Sigmoid colon (tissue), 7 donors: ENCODE measurements at regions of chr20 and their contacts with region 1.

Region 1: GRCh38 chr20:8131598-8132483 is at the start of gene PLCB1:
- DNase-seq: peak; percentile 96
- H3K4me3 ChIP-seq: peak within 1 kb of the TSS; percentile 66 to 97 (median 94)
- H3K27ac ChIP-seq: peak within 1 kb of the TSS; percentile 90 to 93 (median 91)
- H3K4me1 ChIP-seq: peaks cover 0 to 75% (median 60%) of the 10 kb centered on the region in 4 donors
- H3K27me3 ChIP-seq: no peaks in the 10 kb centered on the region
- CTCF ChIP-seq: peak; percentile 77 to 89 (median 83)
- EP300 ChIP-seq: no peak
- POLR2A ChIP-seq: no peak
- total RNA-seq, gene PLCB1: 86.7 to 117 (median 102) TPM

Region 2: GRCh38 chr20:8043687-8044282 is 88.1 kb before region 1 on chr20:
- intact Hi-C with region 1: loop called (anchors 1 kb)
- DNase-seq: no peak
- H3K4me3 ChIP-seq: no peak overlapping the region
- H3K27ac ChIP-seq: no peak overlapping the region
- H3K4me1 ChIP-seq: no peaks in the 10 kb centered on the region
- H3K27me3 ChIP-seq: no peaks in the 10 kb centered on the region
- CTCF ChIP-seq: peak; percentile 60 to 80 (median 70)
- EP300 ChIP-seq: no peak
- POLR2A ChIP-seq: no peak

Region 3: DNA sequence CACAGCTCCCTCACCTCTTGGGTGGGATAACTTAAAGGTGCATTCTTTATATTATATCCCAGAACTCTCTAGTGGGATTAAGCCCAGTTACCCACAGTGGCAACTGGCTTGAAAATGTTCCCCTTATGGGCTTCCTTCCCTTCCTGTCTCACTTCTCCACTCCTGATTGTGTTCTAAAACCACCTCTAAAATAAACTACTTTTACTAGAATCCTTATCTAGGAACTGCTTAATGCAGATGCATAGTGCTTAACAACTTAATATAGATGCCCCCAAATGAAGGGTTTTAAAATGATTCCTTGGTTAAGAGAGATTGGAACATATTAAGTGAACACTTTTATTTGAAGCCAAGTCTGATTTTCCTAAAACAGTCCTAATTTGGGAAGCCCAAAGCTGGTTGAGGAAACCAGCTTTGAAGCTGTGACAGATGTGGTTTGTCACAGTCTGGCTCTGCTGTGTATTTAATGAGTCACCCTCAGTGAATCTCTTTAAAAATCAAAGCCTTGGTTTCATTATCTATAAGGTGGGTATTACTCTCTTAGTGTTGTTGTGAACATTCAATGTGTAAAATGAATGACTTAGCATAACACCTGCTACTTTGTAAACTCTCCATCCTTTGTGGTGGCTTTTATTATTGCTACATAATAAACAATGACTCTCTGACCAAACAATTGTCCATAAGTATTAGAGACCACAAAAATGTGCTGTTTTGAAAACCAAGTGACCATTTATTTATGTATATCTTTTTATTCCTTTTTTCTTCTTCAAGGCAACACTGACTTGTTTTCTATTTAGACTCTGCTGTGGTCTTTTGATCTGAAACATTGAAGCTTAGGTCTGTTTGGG is 24.6 kb after region 1 on chr20:
- intact Hi-C with region 1: no loop called
- DNase-seq: no peak
- H3K4me3 ChIP-seq: no peak overlapping the region
- H3K27ac ChIP-seq: peak overlapping the region; percentile 8 to 52 (median 46)
- H3K4me1 ChIP-seq: peaks cover 0 to 57% (median 47%) of the 10 kb centered on the region in 4 donors
- H3K27me3 ChIP-seq: no peaks in the 10 kb centered on the region
- CTCF ChIP-seq: no peak
- EP300 ChIP-seq: no peak
- POLR2A ChIP-seq: no peak

Region 4: GRCh38 chr20:8187740-8188139 is 55.9 kb after region 1 on chr20:
- intact Hi-C with region 1: no loop called
- DNase-seq: no peak
- H3K4me3 ChIP-seq: no peak overlapping the region
- H3K27ac ChIP-seq: no peak overlapping the region
- H3K4me1 ChIP-seq: peaks cover 0 to 23% (median 8%) of the 10 kb centered on the region in 4 donors
- H3K27me3 ChIP-seq: no peaks in the 10 kb centered on the region
- CTCF ChIP-seq: no peak
- EP300 ChIP-seq: no peak
- POLR2A ChIP-seq: no peak

Region 5: DNA sequence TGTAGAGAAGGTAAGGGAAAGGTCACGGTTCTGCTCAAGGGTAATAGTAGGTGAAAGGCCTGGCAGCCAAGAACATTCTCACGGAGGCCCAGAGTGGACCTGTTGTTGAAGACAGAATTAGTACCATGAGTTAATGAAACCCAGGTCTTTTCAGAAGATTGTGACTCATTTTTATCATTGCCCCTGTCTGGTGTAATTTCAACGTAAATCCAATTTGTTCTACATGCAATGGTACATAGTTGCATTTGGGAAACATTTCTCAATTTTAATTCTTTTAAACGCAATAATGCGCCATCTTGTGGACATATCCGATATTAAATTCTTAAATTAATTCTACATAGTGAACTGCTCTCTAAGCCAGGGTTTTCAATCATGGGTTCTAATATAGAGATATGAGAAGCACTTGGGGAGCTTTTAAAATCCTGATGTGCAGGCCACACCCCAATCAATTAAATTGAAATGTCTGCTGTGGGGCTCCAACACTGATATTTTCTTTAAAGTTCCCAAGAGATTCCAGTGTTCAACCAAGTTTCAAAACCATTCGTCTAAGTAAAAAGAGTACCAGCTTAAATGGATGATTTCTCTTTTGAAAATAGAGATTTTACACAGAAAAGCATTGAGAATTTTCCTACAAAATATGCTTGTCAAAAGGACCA is 257.7 kb after region 1 on chr20:
- intact Hi-C with region 1: loop called (anchors 1 kb)
- DNase-seq: no peak
- H3K4me3 ChIP-seq: no peak overlapping the region
- H3K27ac ChIP-seq: peak overlapping the region in 1 of 4 donors; percentile 2
- H3K4me1 ChIP-seq: peaks cover 0 to 34% (median 32%) of the 10 kb centered on the region in 4 donors
- H3K27me3 ChIP-seq: no peaks in the 10 kb centered on the region
- CTCF ChIP-seq: peak; percentile 25 to 60 (median 42)
- EP300 ChIP-seq: no peak
- POLR2A ChIP-seq: no peak

Region 6: DNA sequence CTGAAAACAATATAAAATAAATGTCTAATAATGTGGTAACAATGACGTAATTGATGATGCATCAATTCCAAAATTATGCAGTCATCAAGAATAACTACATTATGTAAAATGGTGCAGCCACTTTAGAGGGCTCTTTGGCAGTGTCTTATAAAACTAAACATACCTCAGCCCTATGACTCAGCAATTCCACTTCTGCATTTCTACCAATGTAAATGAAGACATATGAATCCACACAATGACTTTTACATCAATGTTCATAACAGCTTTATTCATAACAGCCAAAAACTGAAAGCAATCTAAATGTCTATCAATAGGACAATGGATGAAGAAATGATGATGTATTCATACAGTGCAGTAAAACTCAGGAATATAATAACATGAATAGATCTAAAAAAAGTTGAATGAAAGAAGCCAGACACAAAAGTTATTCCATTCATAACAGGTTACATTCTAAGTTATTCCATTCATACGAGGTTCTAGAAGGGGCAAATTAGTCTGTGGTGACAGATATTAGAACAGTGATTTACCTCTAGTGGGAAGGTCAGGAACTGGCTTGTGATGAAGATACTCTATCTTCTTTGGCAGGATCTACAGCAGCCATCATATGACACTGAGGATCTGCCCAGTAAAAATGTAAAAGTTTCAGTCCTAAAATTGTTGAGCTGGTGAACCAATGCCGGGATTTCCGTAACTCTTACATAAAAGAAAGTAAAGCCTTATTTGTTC is 396.3 kb after region 1 on chr20:
- intact Hi-C with region 1: loop called (anchors 10 kb)
- DNase-seq: no peak
- H3K4me3 ChIP-seq: no peak overlapping the region
- H3K27ac ChIP-seq: no peak overlapping the region
- H3K4me1 ChIP-seq: peaks cover 0 to 26% (median 9%) of the 10 kb centered on the region in 4 donors
- H3K27me3 ChIP-seq: no peaks in the 10 kb centered on the region
- CTCF ChIP-seq: no peak
- EP300 ChIP-seq: no peak
- POLR2A ChIP-seq: no peak